HepG2 (cell line): ENCODE measurements at regions of chr6 and their contacts with region 1.

Region 1: GRCh38 chr6:42075159-42075838 is 25.0 kb downstream of the TAF8 start:
- DNase-seq: peak; percentile 69
- ATAC-seq: peak; percentile 74
- H3K4me3 ChIP-seq: no peak overlapping the region
- H3K27ac ChIP-seq: no peak overlapping the region
- H3K4me1 ChIP-seq: no peaks in the 10 kb centered on the region
- H3K27me3 ChIP-seq: no peaks in the 10 kb centered on the region
- CTCF ChIP-seq: peak; percentile 93
- EP300 ChIP-seq: no peak
- POLR2A ChIP-seq: no peak
- RAD21 ChIP-seq: peak; percentile 89

Region 2: DNA sequence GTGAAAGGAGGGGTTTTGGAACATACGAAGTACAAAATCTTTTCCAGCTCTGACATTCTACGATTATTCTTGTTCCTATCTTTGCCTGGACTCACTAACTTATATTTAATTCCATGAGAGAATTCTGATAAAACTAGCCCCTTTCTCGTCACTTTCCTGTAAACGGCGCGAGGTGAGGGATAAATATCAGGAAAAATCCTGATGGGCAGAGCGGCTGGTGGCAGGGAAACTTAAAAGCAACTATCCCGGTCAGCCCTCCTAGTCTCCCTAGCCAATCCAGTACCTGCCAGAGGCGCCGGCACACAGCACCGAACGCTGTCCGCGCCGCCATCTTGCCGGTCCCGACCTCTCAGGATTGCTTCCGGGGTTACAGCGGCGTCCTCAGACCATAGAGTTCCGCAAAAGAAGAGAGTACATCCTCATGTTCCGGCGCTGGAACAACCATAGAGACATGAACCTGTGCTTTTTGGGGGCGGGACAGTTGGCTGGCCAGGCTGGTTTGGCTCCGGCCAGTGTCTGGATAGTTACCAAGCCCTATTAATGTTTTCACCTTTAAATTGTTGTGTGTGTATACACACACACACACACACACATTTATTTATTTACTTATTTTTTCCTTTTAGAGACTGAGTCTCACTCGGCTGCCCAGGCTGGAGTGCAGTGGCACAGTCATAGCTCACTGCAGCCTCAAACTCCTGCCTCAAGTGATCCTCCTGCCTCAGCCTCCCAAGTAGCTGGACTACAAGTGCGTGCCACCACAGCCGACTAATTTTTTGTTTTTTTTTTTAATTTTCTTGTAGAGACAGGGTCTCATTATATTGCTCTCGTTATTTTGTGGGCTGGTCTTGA is 142.4 kb after region 1 on chr6 and contains the start of gene MRPS10:
- CTCF ChIA-PET with region 1: interaction called, 29 read pairs
- POLR2A ChIA-PET with region 1: interaction called, 3 read pairs
- in situ Hi-C with region 1: no loop called
- intact Hi-C with region 1: loop called (anchors 1 kb)
- DNase-seq: peak; percentile 97
- ATAC-seq: peak; percentile 98
- H3K4me3 ChIP-seq: peak within 1 kb of the TSS; percentile 69 to 100 (median 84)
- H3K27ac ChIP-seq: peak within 1 kb of the TSS; percentile 83
- H3K4me1 ChIP-seq: peaks cover 49% of the 10 kb centered on the region
- H3K27me3 ChIP-seq: no peaks in the 10 kb centered on the region; a peak in 1 of 5 replicates
- CTCF ChIP-seq: peak; percentile 37; the same call in 1 of the 2 replicates
- EP300 ChIP-seq: peak in 1 of 2 experiments; percentile 33; a peak in 1 of 4 replicates
- POLR2A ChIP-seq: peak; percentile 89 to 96
- RAD21 ChIP-seq: 0 out of 2 replicates have a peak, but pooled peaks have one; percentile 18
- total RNA-seq, gene MRPS10: 54.6 and 79.2 TPM in 2 replicates

Region 3: GRCh38 chr6:43644931-43645612 is 1569.8 kb after region 1 on chr6 and contains the start of gene RSPH9:
- CTCF ChIA-PET with region 1: no interaction called
- POLR2A ChIA-PET with region 1: no interaction called
- in situ Hi-C with region 1: no loop called
- intact Hi-C with region 1: no loop called
- DNase-seq: no peak
- ATAC-seq: peak; percentile 14; the same call in 1 of the 3 replicates
- H3K4me3 ChIP-seq: no peak within 1 kb of the TSS
- H3K27ac ChIP-seq: no peak within 1 kb of the TSS
- H3K4me1 ChIP-seq: no peaks in the 10 kb centered on the region
- H3K27me3 ChIP-seq: peaks cover 0 to 7% of the 10 kb centered on the region in 2 experiments; a peak in 1 of 5 replicates
- CTCF ChIP-seq: no peak
- EP300 ChIP-seq: no peak
- POLR2A ChIP-seq: no peak
- RAD21 ChIP-seq: no peak
- total RNA-seq, gene RSPH9: 0.04 TPM in 1 of 2 replicates, not detected in the other